GM23248 (cell line): ENCODE measurements at regions of chr11 and their contacts with region 1.

Region 1: GRCh38 chr11:57567515-57568329 is at the start of gene UBE2L6:
- DNase-seq: peak; percentile 90
- H3K4me3 ChIP-seq: peak within 1 kb of the TSS; percentile 99
- H3K27ac ChIP-seq: peak within 1 kb of the TSS; percentile 91
- H3K4me1 ChIP-seq: peaks cover 24% of the 10 kb centered on the region
- H3K27me3 ChIP-seq: no peaks in the 10 kb centered on the region
- total RNA-seq, gene UBE2L6: 32.8 and 41.5 TPM in 2 replicates

Region 2: GRCh38 chr11:57426929-57427726 is 140.6 kb before region 1 on chr11 and contains the start of gene SLC43A3:
- in situ Hi-C with region 1: no loop called
- DNase-seq: peak; percentile 94
- H3K4me3 ChIP-seq: peak within 1 kb of the TSS; percentile 70
- H3K27ac ChIP-seq: peak within 1 kb of the TSS; percentile 99
- H3K4me1 ChIP-seq: peaks cover 45% of the 10 kb centered on the region
- H3K27me3 ChIP-seq: no peaks in the 10 kb centered on the region
- total RNA-seq, gene SLC43A3: 23.2 and 57.7 TPM in 2 replicates

Region 3: GRCh38 chr11:57644748-57645688 is 77.3 kb after region 1 on chr11:
- in situ Hi-C with region 1: loop called (anchors 5 kb)
- DNase-seq: peak; percentile 78
- H3K4me3 ChIP-seq: no peak overlapping the region
- H3K27ac ChIP-seq: no peak overlapping the region
- H3K4me1 ChIP-seq: peaks cover 32% of the 10 kb centered on the region
- H3K27me3 ChIP-seq: no peaks in the 10 kb centered on the region